A673 (cell line): ENCODE measurements at regions of chr20 and their contacts with region 1.

Region 1: GRCh38 chr20:17682103-17682888 is at the start of gene RRBP1:
- DNase-seq: peak; percentile 99
- H3K4me3 ChIP-seq: peak within 1 kb of the TSS; percentile 66
- H3K27ac ChIP-seq: peak within 1 kb of the TSS; percentile 70
- H3K4me1 ChIP-seq: peaks cover 16% of the 10 kb centered on the region
- H3K27me3 ChIP-seq: peaks cover 15% of the 10 kb centered on the region
- CTCF ChIP-seq: peak; percentile 90
- total RNA-seq, gene RRBP1: 75.9 and 82.8 TPM in 2 replicates

Region 2: DNA sequence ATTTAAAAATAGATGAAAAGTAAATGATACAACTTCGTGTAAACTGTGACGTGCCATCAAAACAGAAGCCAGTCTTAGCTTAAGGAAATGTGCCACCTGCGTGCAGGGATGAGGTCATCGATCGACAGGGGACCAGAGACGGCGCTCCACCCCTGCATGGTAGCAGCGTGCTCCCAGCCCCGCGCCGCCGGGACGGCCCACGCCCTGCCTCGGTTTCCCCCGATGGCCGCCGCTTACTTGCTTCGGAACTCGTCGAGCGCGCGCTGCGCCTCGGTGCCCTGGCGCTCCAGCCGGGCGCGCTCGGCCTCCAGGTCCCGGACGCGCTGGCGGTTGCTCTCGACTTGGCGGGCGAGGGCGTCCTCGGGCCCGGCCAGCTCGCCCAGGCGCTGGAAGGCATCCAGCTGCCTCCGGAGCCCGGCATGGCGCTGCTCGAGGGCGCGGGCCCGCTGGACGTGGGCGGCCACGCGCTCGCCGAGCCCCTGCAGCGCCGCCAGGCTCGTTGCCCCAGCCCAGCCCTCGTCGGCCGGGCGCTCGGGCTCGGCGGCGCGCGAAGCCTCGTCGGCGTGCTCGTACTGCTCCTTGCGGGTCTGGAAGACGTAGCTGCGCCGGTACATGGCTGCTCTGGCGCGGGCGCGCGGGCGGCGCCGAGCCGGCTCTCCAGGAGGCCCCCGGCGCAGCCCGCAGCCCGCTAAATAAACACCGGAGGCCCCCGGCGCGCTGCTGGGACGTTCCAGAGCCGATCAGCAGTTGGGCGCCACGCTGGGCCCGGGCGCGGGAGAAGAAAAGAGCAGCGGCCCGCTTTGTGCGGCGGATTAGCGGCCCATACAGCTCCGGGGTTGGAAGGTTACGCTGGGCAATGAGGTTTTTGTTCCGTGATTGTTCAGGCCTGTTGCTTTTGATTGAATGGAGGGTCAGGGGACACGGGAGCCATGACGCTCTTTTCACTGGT is 151.3 kb before region 1 on chr20 and contains the start of gene BFSP1:
- CTCF ChIA-PET with region 1: interaction called, 20 read pairs
- POLR2A ChIA-PET with region 1: no interaction called
- intact Hi-C with region 1: loop called (anchors 10 kb)
- DNase-seq: peak; percentile 79
- H3K4me3 ChIP-seq: peak within 1 kb of the TSS; percentile 57
- H3K27ac ChIP-seq: peak within 1 kb of the TSS; percentile 88
- H3K4me1 ChIP-seq: peaks cover 23% of the 10 kb centered on the region
- H3K27me3 ChIP-seq: no peaks in the 10 kb centered on the region
- CTCF ChIP-seq: no peak
- total RNA-seq, gene BFSP1: 6.1 and 7.4 TPM in 2 replicates

Region 3: DNA sequence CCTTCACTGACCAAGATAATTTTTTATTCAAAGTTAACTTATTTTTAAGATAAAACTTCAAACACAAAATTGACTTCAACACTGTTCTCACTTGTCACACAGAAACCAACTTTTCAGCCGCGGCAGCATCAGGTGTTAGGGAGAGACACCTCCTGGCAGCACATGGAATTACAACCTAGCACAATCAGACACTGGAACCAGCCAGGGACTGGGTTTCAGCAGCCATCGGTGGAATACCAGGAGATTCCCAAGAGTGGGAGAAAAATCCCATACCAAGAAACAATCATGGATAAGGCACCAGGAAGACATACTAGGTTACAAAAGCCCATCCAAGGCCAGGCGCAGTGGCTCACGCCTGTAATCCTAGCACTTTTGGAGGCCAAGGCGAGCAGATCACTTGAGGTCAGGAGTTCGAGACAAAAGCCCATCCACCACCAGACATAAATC is 216.3 kb after region 1 on chr20:
- CTCF ChIA-PET with region 1: no interaction called
- POLR2A ChIA-PET with region 1: no interaction called
- intact Hi-C with region 1: loop called (anchors 10 kb)
- DNase-seq: peak; percentile 73
- H3K4me3 ChIP-seq: no peak overlapping the region
- H3K27ac ChIP-seq: no peak overlapping the region
- H3K4me1 ChIP-seq: peaks cover 7% of the 10 kb centered on the region
- H3K27me3 ChIP-seq: no peaks in the 10 kb centered on the region
- CTCF ChIP-seq: peak; percentile 88